Ovary (tissue), 10 donors: ENCODE measurements at regions of chr2 and their contacts with region 1.

Region 1: GRCh38 chr2:11203480-11203879 is 48.2 kb downstream of the SLC66A3 start:
- DNase-seq: no peak
- H3K4me3 ChIP-seq: no peak overlapping the region
- H3K27ac ChIP-seq: no peak overlapping the region
- H3K4me1 ChIP-seq: no peaks in the 10 kb centered on the region
- H3K27me3 ChIP-seq: no peaks in the 10 kb centered on the region
- CTCF ChIP-seq: no peak
- EP300 ChIP-seq: no peak
- POLR2A ChIP-seq: no peak

Region 2: GRCh38 chr2:11224887-11225286 is 21.4 kb after region 1 on chr2:
- intact Hi-C with region 1: loop called in 1 of 4 experiments (anchors 2 kb)
- DNase-seq: no peak
- H3K4me3 ChIP-seq: no peak overlapping the region
- H3K27ac ChIP-seq: no peak overlapping the region
- H3K4me1 ChIP-seq: no peaks in the 10 kb centered on the region
- H3K27me3 ChIP-seq: no peaks in the 10 kb centered on the region
- CTCF ChIP-seq: no peak
- EP300 ChIP-seq: no peak
- POLR2A ChIP-seq: no peak